ENCODE measurements at regions of chr2 and their contacts with region 1.

Region 1: GRCh38 chr2:47174733-47175361 is 19.7 kb upstream of the STPG4 start:
- DNase-seq: peak; percentile 56
- H3K4me3 ChIP-seq: peak overlapping the region; percentile 97
- CTCF ChIP-seq: no peak

Region 2: GRCh38 chr2:47016172-47016913 is 158.5 kb before region 1 on chr2:
- in situ Hi-C with region 1: loop called (anchors 25 kb)
- DNase-seq: peak; percentile 76
- H3K4me3 ChIP-seq: no peak overlapping the region
- CTCF ChIP-seq: peak; percentile 34

Measured in astrocyte of the cerebellum (primary cell).